ENCODE measurements at regions of chr11 and their contacts with region 1.

Region 1: GRCh38 chr11:73478738-73479347 is 102.6 kb downstream of the RELT start:
- DNase-seq: no peak
- H3K4me3 ChIP-seq: no peak overlapping the region
- CTCF ChIP-seq: peak; percentile 76

Region 2: GRCh38 chr11:73295231-73295995 is 183.4 kb before region 1 on chr11:
- CTCF ChIA-PET with region 1: no interaction called
- POLR2A ChIA-PET with region 1: no interaction called
- DNase-seq: no peak
- H3K4me3 ChIP-seq: no peak overlapping the region
- CTCF ChIP-seq: peak; percentile 94

Region 3: DNA sequence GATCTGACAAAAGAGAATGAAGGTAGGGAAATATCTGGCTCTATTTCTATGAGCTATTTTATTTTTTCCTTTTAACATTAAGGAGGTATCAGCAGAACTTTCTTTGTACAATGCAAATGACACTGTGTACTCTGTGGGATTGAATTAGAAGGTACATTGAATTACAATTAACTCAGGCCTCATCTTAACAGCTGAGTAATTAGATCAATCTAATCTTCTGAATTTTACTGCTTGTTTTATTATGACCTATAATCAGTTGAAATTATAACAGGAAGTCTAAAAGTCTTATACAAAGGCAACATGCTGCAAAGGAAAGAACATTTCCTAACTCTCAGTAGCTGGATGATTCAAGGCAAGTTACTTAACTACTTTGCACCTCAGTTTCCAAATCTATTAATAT is 32.9 kb before region 1 on chr11:
- CTCF ChIA-PET with region 1: interaction called, 17 read pairs
- POLR2A ChIA-PET with region 1: no interaction called
- DNase-seq: no peak
- H3K4me3 ChIP-seq: no peak overlapping the region
- CTCF ChIP-seq: no peak

Region 4: GRCh38 chr11:73463359-73463758 is 15.5 kb before region 1 on chr11:
- CTCF ChIA-PET with region 1: interaction called, 76 read pairs
- POLR2A ChIA-PET with region 1: no interaction called
- DNase-seq: peak; percentile 44
- H3K4me3 ChIP-seq: no peak overlapping the region
- CTCF ChIP-seq: no peak

Region 5: DNA sequence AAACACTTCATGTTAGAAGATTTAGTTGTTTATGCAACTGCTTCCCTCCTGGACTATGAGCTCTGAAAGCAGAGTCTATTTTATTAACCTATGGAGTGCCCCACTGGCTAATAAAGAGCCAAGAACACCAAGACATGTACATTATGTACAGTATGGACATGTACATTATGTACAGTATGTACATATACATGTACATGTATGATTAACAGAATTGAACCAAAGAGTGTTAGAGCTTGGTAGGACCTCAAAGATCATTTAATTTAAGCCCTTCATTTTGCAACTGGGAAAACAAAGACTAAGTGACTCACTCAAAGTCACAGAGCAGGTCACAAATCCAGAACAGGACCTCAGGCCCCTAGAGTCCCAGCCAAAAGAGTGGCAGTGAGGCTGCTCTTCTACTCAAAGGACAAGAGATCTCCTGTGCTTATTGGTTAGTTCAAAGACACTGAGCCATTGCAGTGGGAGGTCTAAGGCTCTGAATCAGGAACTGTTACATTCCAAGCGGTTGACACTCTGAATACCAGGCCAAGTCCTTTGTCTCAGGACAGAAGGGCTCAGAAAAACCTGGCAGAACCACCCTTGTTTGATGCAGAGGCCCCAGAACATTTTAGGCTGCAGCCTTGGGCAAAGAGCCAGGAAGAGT is 15.2 kb after region 1 on chr11:
- CTCF ChIA-PET with region 1: interaction called, 40 read pairs
- POLR2A ChIA-PET with region 1: no interaction called
- DNase-seq: peak; percentile 21
- H3K4me3 ChIP-seq: no peak overlapping the region
- CTCF ChIP-seq: no peak

Region 6: GRCh38 chr11:73507086-73507485 is 28.2 kb after region 1 on chr11:
- CTCF ChIA-PET with region 1: interaction called, 19 read pairs
- POLR2A ChIA-PET with region 1: no interaction called
- DNase-seq: no peak
- H3K4me3 ChIP-seq: no peak overlapping the region
- CTCF ChIP-seq: no peak

Measured in AG04449 (cell line).